ENCODE measurements at regions of chr20 and their contacts with region 1.

Region 1: GRCh38 chr20:62875419-62876361 is 14.1 kb upstream of the TCFL5 start:
- DNase-seq: peak; percentile 95
- H3K4me3 ChIP-seq: peak overlapping the region in 2 of 4 donors; percentile 23 to 27
- H3K27ac ChIP-seq: peak overlapping the region; percentile 71 to 88 (median 82)
- H3K4me1 ChIP-seq: peaks cover 0 to 30% (median 28%) of the 10 kb centered on the region in 4 donors
- H3K27me3 ChIP-seq: no peaks in the 10 kb centered on the region
- CTCF ChIP-seq: peak; percentile 35 to 53 (median 42)
- EP300 ChIP-seq: peak in 1 of 4 donors; percentile 49
- POLR2A ChIP-seq: no peak

Region 2: GRCh38 chr20:61173961-61174725 is 1701.5 kb before region 1 on chr20:
- intact Hi-C with region 1: no loop called
- DNase-seq: no peak
- H3K4me3 ChIP-seq: no peak overlapping the region
- H3K27ac ChIP-seq: no peak overlapping the region
- H3K4me1 ChIP-seq: no peaks in the 10 kb centered on the region
- H3K27me3 ChIP-seq: peaks cover 0 to 38% (median 8%) of the 10 kb centered on the region in 3 donors
- CTCF ChIP-seq: no peak
- EP300 ChIP-seq: no peak
- POLR2A ChIP-seq: no peak

Region 3: DNA sequence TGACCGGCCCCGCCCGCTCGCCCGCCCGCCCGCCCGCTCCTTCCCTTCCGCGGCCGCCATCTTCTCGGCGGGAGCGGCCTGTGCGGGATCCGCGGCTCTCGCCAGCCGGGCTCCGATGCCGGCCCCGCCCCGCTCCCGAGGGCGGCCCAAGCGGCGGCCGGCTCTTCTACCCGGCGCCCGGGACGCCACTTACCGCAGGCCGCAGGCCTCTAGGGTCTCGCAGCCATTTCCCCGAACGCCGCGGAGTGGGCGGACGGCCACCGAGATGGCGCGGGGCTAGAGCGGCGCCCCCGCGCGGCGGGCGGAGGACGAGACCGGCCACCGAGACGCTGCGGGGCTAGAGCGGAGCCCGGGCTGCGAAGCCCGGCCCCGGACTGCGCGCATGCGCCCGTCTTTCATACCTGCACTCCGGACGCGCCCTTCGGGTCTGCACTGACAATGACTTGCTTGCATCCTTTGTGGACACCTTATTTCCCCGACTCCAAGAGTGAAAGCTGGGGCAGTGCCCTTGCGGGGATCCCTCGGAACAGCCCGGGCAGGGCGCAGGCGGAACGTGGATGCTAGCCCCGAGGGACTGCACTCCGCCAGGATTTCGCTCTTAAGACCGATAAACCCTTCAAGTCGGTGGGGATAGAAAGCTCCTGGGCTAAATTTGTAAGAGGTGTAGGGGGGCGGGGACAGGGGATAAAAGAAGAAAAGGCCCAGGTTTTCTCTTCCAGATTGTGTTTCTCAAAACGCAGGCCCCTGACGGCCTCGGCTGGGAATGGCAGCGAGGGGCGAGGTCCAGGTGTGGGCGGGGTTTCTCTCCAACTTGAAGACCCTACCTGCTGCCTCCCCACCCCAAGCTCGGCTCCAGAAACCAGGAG is 50.8 kb after region 1 on chr20 and contains the start of gene DIDO1:
- intact Hi-C with region 1: loop called (anchors 5 kb)
- DNase-seq: peak; percentile 91
- H3K4me3 ChIP-seq: peak within 1 kb of the TSS; percentile 92 to 98 (median 94)
- H3K27ac ChIP-seq: peak within 1 kb of the TSS; percentile 97 to 99 (median 98)
- H3K4me1 ChIP-seq: peaks cover 0 to 73% (median 72%) of the 10 kb centered on the region in 4 donors
- H3K27me3 ChIP-seq: no peaks in the 10 kb centered on the region
- CTCF ChIP-seq: peak; percentile 15 to 81 (median 48)
- EP300 ChIP-seq: no peak
- POLR2A ChIP-seq: peak; percentile 12 to 57
- total RNA-seq, gene DIDO1: 48.7 to 70.6 (median 56.5) TPM

Region 4: DNA sequence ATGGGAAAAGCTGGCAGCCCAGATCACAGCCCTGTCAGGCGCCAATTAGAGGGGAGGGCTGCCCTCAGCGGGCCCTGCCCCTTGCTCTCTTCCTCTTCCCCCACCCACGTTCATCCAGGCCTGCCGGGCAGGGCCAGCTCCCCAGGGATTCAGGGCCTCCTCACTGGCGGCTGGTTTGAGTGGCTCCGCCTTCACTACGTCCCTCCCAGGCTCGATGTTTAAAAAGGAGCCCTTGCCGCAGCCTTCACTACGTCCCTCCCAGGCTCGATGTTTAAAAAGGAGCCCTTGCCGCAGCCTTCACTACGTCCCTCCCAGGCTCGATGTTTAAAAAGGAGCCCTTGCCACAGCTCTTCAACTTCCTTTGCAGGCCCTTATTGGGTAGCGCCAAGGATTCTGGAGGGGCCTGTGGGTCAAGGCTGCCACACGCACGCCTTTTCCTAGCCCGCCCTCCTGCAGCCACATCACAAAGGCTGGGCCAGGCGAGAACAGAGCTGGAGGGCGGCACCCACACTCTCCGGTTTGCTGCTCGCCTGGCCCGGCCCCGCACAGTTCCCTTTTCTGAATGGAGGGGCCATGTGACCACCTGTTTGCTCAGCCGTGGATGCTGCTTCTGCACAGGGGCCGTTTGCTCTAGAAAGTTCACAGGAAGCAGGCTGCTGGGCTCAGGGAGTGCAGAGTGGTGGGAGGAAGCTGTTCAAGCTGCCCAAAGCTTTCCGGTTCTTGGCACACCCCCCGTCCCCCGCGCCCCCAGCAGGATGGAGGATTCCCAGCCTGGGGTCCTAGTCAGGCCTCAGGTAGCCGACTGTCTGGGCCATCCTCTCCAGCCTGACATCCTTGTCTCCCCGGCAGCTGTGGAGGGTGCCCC is 78.4 kb after region 1 on chr20:
- intact Hi-C with region 1: loop called (anchors 5 kb)
- DNase-seq: peak; percentile 94
- H3K4me3 ChIP-seq: peak overlapping the region; percentile 6 to 50 (median 32)
- H3K27ac ChIP-seq: peak overlapping the region; percentile 86 to 97 (median 90)
- H3K4me1 ChIP-seq: peaks cover 0 to 32% (median 30%) of the 10 kb centered on the region in 4 donors
- H3K27me3 ChIP-seq: no peaks in the 10 kb centered on the region
- CTCF ChIP-seq: no peak
- EP300 ChIP-seq: no peak
- POLR2A ChIP-seq: no peak

Region 5: GRCh38 chr20:62984666-62985443 is 109.2 kb after region 1 on chr20:
- intact Hi-C with region 1: no loop called
- DNase-seq: no peak
- H3K4me3 ChIP-seq: no peak overlapping the region
- H3K27ac ChIP-seq: no peak overlapping the region
- H3K4me1 ChIP-seq: peaks cover 0 to 5% (median 0%) of the 10 kb centered on the region in 4 donors
- H3K27me3 ChIP-seq: peaks cover 11 to 81% (median 43%) of the 10 kb centered on the region in 3 donors
- CTCF ChIP-seq: no peak
- EP300 ChIP-seq: no peak
- POLR2A ChIP-seq: no peak

Region 6: DNA sequence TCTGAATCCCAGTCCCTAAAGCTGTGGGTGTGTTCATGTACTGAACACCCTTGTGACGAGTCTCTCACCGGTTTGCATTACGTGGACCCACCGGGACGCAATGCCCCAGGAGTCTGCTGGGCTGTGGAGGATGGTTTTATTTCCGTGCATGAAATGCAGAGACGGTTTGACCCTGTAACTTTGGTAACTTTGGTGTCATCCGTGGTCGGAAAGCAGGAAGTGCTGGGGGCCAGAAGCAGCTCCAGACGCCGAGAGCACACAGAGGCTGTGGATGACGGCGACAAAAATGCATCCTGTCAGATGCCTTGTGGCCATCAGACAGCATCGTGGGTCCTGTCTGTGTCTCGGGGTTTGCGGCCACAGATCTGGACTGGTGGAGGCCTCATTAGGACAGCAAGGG is 123.9 kb after region 1 on chr20:
- intact Hi-C with region 1: no loop called
- DNase-seq: no peak
- H3K4me3 ChIP-seq: no peak overlapping the region
- H3K27ac ChIP-seq: no peak overlapping the region
- H3K4me1 ChIP-seq: peaks cover 0 to under 1% (median 0%) of the 10 kb centered on the region in 4 donors
- H3K27me3 ChIP-seq: peaks cover 15 to 92% (median 65%) of the 10 kb centered on the region in 3 donors
- CTCF ChIP-seq: no peak
- EP300 ChIP-seq: no peak
- POLR2A ChIP-seq: no peak

Measured in sigmoid colon (tissue), 7 donors.